Esophagus squamous epithelium (tissue), 5 donors: ENCODE measurements at regions of chr6 and their contacts with region 1.

Region 1: DNA sequence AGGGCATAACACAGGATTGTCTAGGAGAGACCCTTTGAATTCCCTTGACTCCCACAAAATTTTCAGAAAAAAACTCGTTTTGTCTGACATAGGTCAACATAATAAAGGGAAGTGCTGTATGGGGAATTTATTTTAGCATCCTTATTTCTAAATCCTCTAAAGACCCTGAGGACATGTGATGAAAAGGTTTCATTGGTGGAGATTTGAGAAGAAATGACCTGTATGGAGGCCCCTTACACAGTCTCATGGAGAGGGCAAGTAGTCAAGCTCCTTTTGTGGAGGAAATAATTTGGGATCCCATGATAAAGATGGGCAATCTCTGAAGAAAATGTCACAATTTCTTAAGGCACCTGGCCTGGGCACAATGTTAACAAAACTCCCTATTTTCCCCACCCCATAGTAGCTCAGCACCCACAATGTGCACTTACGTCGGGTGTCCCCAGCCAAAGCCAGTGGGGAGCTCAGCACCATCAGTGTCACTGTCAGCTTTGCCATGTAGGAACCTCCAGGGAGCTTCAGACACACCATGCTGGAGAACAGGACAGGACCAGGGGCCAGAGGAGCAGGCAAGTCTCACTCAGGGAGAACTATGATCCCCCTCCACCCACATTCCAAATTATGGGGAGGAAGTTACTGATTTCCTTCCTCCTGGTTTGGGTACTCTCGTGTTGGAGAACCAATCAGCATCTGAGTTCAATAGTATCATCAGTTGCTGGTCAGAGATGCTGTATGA is at the start of gene HLA-DRB5:
- DNase-seq: no peak
- H3K4me3 ChIP-seq: peak within 1 kb of the TSS in 1 of 4 donors; percentile 8
- H3K27ac ChIP-seq: peak within 1 kb of the TSS in 1 of 4 donors; percentile 31
- H3K4me1 ChIP-seq: no peaks in the 10 kb centered on the region
- H3K27me3 ChIP-seq: no peaks in the 10 kb centered on the region
- CTCF ChIP-seq: no peak
- POLR2A ChIP-seq: no peak
- total RNA-seq, gene HLA-DRB5: 0.19 to 8.4 (median 7.7) TPM in 3 of 4 donors, not detected in the other

Region 2: GRCh38 chr6:32589598-32590449 is 60.0 kb after region 1 on chr6 and contains the start of gene HLA-DRB1:
- intact Hi-C with region 1: loop called (anchors 10 kb)
- DNase-seq: no peak
- H3K4me3 ChIP-seq: peak within 1 kb of the TSS in 1 of 4 donors; percentile 24
- H3K27ac ChIP-seq: peak within 1 kb of the TSS in 1 of 4 donors; percentile 48
- H3K4me1 ChIP-seq: no peaks in the 10 kb centered on the region
- H3K27me3 ChIP-seq: no peaks in the 10 kb centered on the region
- CTCF ChIP-seq: no peak
- POLR2A ChIP-seq: no peak
- total RNA-seq, gene HLA-DRB1: 3.7 to 68.8 (median 22.4) TPM